GM10248 (cell line): ENCODE measurements at regions of chr14 and their contacts with region 1.

Region 1: DNA sequence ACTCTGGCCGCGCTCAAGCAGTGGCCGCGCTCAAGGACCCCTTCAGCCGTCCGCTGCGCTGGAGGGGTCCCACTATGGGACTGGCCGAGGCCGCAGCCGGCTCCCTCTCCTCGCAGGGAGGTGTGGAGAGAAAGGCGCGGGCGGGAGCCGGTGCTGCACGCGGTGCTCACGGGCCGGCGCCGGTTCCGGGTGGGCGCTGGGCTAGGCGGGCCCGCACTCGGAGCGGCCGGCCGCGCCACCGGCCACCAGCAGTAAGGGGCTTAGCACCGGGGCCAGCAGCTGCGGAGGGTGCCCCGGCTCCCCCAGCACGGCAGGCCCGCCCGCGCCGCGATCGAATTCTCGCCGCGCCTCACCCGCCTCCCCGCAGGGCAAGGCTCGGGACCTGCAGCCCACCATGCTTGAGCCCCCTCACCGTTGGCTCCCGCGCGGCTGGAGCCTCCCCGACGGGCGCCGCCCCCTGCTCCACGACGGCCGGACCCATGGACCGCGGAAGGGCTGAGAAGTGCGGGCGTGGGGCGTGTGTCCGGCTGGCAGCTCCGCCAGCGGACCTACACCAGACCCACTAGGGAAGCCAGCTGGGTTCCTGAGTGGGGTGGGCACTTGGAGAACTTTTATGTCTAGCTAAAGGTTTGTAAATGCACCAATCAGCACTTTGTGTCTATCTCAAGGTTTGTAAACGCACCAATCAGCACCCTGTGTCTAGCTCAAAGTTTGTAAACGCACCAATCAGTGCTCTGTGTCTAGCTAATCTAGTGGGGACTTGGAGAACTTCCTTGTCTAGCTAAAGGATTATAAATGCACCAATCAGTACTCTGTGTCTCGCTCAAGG is 49.5 kb downstream of the KLHL28 start:
- DNase-seq: no peak
- CTCF ChIP-seq: no peak

Region 2: GRCh38 chr14:44756554-44756953 is 155.7 kb before region 1 on chr14:
- CTCF ChIA-PET with region 1: no interaction called
- POLR2A ChIA-PET with region 1: no interaction called
- DNase-seq: no peak
- CTCF ChIP-seq: no peak

Region 3: DNA sequence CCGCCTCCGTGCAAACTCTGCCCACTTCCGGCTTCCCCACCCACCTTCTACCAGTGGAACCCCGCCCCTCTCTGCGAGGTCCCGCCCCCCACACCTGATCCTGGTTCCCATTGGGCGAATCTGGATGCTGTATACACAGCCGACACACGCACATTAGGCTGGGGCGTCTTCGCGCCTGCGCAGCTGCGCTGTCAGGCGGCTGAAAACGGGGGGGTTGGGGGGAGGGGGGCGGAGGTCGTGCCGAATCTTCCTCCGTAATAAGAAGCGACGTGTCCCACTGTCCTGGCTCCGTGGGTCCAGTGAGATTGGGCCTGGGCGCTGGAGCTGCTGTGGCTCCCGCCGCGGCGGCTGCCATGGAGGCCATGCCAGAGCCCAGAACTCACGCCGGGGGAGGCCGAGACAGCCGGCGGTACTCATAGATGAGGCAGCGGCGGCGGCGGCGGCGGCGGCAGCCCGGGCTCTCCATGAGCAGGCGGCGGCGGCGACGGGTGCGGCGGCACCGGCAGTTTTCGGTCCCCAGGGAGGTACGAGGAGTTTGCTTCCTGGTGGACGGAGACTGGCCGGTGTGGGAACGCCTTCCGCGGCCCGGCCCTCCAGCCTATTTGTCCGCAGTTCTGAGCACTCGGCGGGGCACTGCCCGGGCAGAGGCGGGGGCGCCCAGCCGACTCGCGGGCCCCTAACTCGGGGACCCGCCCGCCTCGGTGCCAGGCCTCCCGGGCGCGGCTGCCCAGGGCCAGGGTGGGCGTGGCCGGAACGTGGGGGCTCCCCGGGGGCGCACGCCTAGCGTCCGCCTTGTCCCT is 15.0 kb before region 1 on chr14:
- CTCF ChIA-PET with region 1: interaction called, 22 read pairs
- POLR2A ChIA-PET with region 1: interaction called, 3 read pairs
- DNase-seq: peak; percentile 97
- CTCF ChIP-seq: no peak

Region 4: GRCh38 chr14:44928793-44929192 is 16.5 kb after region 1 on chr14:
- CTCF ChIA-PET with region 1: interaction called, 10 read pairs
- POLR2A ChIA-PET with region 1: no interaction called
- DNase-seq: no peak
- CTCF ChIP-seq: no peak

Region 5: GRCh38 chr14:44935155-44935554 is 22.9 kb after region 1 on chr14:
- CTCF ChIA-PET with region 1: interaction called, 10 read pairs
- POLR2A ChIA-PET with region 1: no interaction called
- DNase-seq: no peak
- CTCF ChIP-seq: no peak

Region 6: GRCh38 chr14:44979740-44980356 is 67.6 kb after region 1 on chr14:
- CTCF ChIA-PET with region 1: no interaction called
- POLR2A ChIA-PET with region 1: no interaction called
- DNase-seq: no peak
- CTCF ChIP-seq: no peak

Region 7: DNA sequence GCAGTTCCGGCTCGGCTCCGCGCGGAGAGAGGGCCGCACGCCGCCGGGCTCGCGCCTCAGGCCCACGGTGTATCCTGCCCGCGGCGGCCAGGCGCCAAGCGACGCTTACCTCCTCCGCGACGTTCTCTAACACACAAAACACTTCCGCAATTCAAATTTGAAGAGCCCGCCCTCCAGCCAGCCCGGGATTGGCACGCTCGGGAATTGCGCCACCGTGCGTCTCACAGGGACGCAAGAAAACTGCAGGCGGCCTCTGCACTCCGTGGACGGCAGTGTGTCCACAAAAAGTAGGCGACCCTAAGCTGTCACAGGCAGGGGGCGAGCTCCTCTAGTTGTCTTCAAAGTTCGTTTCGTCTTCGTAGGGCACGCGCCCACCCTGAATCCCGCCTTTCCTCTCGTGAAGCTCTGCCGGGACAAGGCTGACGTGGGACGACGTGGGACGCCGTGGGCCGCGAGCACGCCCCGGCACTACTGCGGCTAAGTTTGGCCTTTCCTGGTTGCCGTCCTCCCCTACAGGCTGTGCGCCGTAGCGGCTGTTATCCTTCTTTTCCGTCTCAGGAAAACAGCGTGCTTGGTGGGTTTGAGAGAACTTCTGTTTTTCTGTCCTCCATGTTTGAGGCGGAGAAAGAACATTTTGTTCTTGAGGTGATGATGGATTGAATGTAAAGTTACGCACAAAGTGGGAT is 341.0 kb after region 1 on chr14 and contains the start of gene MIS18BP1:
- CTCF ChIA-PET with region 1: interaction called, 25 read pairs
- POLR2A ChIA-PET with region 1: no interaction called
- DNase-seq: peak; percentile 91
- CTCF ChIP-seq: peak; percentile 79

Region 8: DNA sequence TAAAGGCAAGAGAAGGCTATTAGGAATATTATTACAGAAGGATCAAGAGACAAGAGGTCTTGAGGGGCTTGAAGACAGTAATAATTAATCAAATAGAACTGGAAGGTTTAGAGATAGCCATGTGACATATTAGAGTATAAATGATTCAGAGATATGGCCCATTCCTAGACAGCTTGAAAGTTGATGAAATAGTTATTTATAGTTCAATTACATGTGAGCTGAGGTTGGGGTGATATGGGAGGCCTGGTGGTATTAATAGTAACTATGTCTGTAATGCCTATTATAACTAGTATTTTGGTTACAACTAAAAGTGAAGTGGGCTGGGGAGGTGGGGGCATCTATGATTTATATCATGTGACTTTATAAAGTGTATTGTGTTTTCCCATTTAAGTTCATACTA is 354.8 kb after region 1 on chr14:
- CTCF ChIA-PET with region 1: interaction called, 86 read pairs
- POLR2A ChIA-PET with region 1: no interaction called
- DNase-seq: no peak
- CTCF ChIP-seq: no peak